ENCODE measurements at regions of chr7 and their contacts with region 1.

Region 1: GRCh38 chr7:41277561-41277960 is 425.3 kb downstream of the INHBA start:
- DNase-seq: no peak
- H3K4me3 ChIP-seq: no peak overlapping the region
- H3K27ac ChIP-seq: no peak overlapping the region
- H3K4me1 ChIP-seq: no peaks in the 10 kb centered on the region
- CTCF ChIP-seq: no peak

Region 2: DNA sequence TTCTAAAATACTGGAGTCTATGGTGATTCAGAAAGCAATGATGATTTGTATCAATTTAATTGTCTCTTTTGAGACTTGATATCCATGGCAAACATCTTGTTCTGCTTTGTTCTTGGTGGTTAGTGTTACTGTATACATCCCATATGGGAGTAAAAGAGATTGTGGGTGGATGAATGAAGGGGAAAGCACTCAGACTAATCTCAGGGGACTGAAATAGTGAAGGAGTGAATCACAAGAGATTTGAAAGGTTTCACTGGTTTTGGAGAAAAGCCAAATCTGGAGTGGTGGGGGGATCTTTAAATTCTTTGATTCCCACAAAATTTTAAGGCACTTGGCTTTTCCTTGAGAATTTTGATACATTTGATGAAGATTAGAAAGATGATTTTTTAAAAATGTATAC is 56.0 kb after region 1 on chr7:
- CTCF ChIA-PET with region 1: no interaction called
- POLR2A ChIA-PET with region 1: no interaction called
- intact Hi-C with region 1: loop called (anchors 10 kb)
- DNase-seq: no peak
- H3K4me3 ChIP-seq: no peak overlapping the region
- H3K27ac ChIP-seq: no peak overlapping the region
- H3K4me1 ChIP-seq: no peaks in the 10 kb centered on the region
- CTCF ChIP-seq: no peak

Measured in OCI-LY7 (cell line).